ENCODE measurements at regions of chr3 and their contacts with region 1.

Region 1: GRCh38 chr3:126982471-126983175 is at the start of gene PLXNA1:
- DNase-seq: peak; percentile 85
- H3K4me3 ChIP-seq: peak within 1 kb of the TSS; percentile 70 to 81 (median 71)
- H3K27ac ChIP-seq: peak within 1 kb of the TSS; percentile 50
- H3K4me1 ChIP-seq: peaks cover 36% of the 10 kb centered on the region
- H3K27me3 ChIP-seq: no peaks in the 10 kb centered on the region
- CTCF ChIP-seq: peak; percentile 81 to 89
- total RNA-seq, gene PLXNA1: 104 to 156 TPM

Region 2: DNA sequence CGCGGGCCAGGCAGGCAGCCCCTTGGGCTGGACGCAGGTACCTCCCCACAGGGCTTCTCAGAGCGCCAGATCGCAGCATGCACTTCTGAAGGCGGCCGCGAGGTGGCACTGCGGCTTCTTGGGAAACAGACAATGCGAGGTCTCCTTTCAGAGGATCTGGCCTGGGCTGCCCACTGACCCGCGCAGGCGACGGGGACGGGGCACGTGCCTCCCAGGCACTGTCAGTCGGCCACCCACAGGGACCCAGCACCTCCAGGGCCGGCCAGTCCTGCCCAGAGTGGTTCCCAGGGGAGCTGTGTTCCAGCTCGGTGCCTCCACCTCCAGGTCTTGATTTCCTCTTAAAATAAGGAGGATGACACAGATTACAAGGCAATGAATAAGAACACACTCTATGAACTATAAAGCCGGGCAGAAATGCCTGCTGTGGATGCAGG is 303.3 kb before region 1 on chr3:
- CTCF ChIA-PET with region 1: no interaction called
- dilution Hi-C with region 1: no loop called
- in situ Hi-C with region 1: no loop called
- intact Hi-C with region 1: loop called (anchors 2 kb)
- DNase-seq: peak; percentile 55
- H3K4me3 ChIP-seq: peak overlapping the region in 1 of 3 experiments; percentile 15
- H3K27ac ChIP-seq: no peak overlapping the region
- H3K4me1 ChIP-seq: peaks cover 5% of the 10 kb centered on the region
- H3K27me3 ChIP-seq: no peaks in the 10 kb centered on the region
- CTCF ChIP-seq: peak; percentile 90 to 95

Region 3: GRCh38 chr3:127002195-127003174 is 19.9 kb after region 1 on chr3:
- CTCF ChIA-PET with region 1: interaction called, 5 read pairs
- dilution Hi-C with region 1: no loop called
- in situ Hi-C with region 1: no loop called
- intact Hi-C with region 1: loop called (anchors 1 kb)
- DNase-seq: peak; percentile 82
- H3K4me3 ChIP-seq: peak overlapping the region in 2 of 3 experiments; percentile 18 to 20
- H3K27ac ChIP-seq: peak overlapping the region; percentile 42
- H3K4me1 ChIP-seq: peaks cover 63% of the 10 kb centered on the region
- H3K27me3 ChIP-seq: no peaks in the 10 kb centered on the region
- CTCF ChIP-seq: peak; percentile 45 to 64

Region 4: GRCh38 chr3:127074728-127075360 is 92.2 kb after region 1 on chr3:
- CTCF ChIA-PET with region 1: no interaction called
- dilution Hi-C with region 1: loop called (anchors 5 kb)
- in situ Hi-C with region 1: no loop called
- intact Hi-C with region 1: no loop called
- DNase-seq: peak; percentile 94
- H3K4me3 ChIP-seq: peak overlapping the region in 1 of 3 experiments; percentile 28
- H3K27ac ChIP-seq: peak overlapping the region; percentile 99
- H3K4me1 ChIP-seq: peaks cover 39% of the 10 kb centered on the region
- H3K27me3 ChIP-seq: no peaks in the 10 kb centered on the region
- CTCF ChIP-seq: no peak

Region 5: GRCh38 chr3:127544192-127544802 is 561.7 kb after region 1 on chr3:
- CTCF ChIA-PET with region 1: no interaction called
- dilution Hi-C with region 1: no loop called
- in situ Hi-C with region 1: no loop called
- intact Hi-C with region 1: loop called (anchors 1 kb)
- DNase-seq: peak; percentile 43
- H3K4me3 ChIP-seq: no peak overlapping the region
- H3K27ac ChIP-seq: no peak overlapping the region
- H3K4me1 ChIP-seq: peaks cover 5% of the 10 kb centered on the region
- H3K27me3 ChIP-seq: no peaks in the 10 kb centered on the region
- CTCF ChIP-seq: peak; percentile 79 to 89